B cell (primary cell): ENCODE measurements at regions of chr14 and their contacts with region 1.

Region 1: GRCh38 chr14:22822571-22823098 is 7.1 kb upstream of the MRPL52 start:
- DNase-seq: peak; percentile 87
- ATAC-seq: peak; percentile 67
- H3K4me3 ChIP-seq: peak overlapping the region; percentile 49 to 85 (median 56)
- H3K4me3 Mint-ChIP-seq: peak overlapping the region; percentile 88
- H3K27ac ChIP-seq: peak overlapping the region; percentile 65 to 71
- H3K27ac Mint-ChIP-seq: peak overlapping the region; percentile 94
- H3K4me1 ChIP-seq: peaks cover 31 to 47% of the 10 kb centered on the region in 2 donors
- H3K4me1 Mint-ChIP-seq: peaks cover 61% of the 10 kb centered on the region
- H3K27me3 ChIP-seq: no peaks in the 10 kb centered on the region
- H3K27me3 Mint-ChIP-seq: no peaks in the 10 kb centered on the region
- CTCF ChIP-seq: peak; percentile 82

Region 2: DNA sequence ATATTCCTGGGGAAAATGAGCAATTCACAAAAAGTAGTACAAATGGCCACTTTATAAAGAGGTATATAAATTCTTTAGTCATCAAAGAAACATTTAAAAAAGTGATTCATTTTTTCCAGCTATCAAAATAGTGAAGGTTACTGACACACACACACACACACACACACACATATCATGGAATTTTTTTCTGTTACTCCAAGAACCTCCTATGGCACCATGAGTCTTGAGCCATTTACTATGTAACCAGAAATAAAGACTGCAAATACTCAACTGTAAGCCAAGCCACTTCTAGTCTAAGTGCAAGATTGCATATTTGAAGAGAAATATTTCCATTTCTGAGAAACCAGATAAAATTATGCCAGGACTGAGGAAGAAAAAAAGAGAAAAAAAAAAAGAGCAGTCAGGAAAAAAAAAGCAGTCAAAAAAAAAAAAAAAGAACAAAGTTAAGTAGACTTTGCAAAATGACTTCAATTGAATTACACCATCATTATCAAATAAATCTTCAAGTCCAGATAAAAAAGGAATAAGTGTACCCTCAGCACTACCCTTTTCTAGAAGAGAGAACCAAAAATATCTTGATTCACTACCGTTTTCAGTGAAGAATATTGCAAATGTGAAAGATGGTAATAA is 509.3 kb before region 1 on chr14:
- CTCF ChIA-PET with region 1: no interaction called
- POLR2A ChIA-PET with region 1: no interaction called
- intact Hi-C with region 1: no loop called
- DNase-seq: no peak
- ATAC-seq: no peak
- H3K4me3 ChIP-seq: no peak overlapping the region
- H3K4me3 Mint-ChIP-seq: no peak overlapping the region
- H3K27ac ChIP-seq: no peak overlapping the region
- H3K27ac Mint-ChIP-seq: no peak overlapping the region
- H3K4me1 ChIP-seq: no peaks in the 10 kb centered on the region
- H3K4me1 Mint-ChIP-seq: peaks cover 5% of the 10 kb centered on the region
- H3K27me3 ChIP-seq: no peaks in the 10 kb centered on the region
- H3K27me3 Mint-ChIP-seq: no peaks in the 10 kb centered on the region
- CTCF ChIP-seq: no peak

Region 3: DNA sequence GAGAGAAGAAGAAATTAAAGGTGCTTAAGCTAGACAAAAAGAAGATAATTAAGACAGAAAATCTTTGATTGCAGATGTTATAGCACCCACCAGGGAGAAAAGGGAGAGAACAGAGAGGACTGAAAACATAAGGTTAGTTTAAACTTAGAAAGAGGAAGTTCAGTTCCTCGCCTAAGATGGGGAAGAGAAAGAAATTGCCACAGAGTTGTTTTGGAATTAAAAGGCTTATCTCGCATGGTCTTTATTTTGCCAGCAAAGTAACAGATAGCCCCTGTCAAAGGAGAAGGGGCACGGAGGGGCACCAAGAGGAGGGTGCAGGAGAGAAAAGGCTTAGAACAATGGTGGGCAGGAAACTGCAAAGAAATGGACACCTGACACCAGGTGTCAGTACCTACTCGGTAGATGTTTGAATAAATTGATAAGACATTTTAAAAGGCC is 74.0 kb before region 1 on chr14:
- CTCF ChIA-PET with region 1: interaction called, 16 read pairs
- POLR2A ChIA-PET with region 1: interaction called, 3 read pairs
- intact Hi-C with region 1: no loop called
- DNase-seq: peak; percentile 71
- ATAC-seq: peak; percentile 80
- H3K4me3 ChIP-seq: peak overlapping the region in 4 of 5 experiments; percentile 8 to 58 (median 32)
- H3K4me3 Mint-ChIP-seq: peak overlapping the region; percentile 80
- H3K27ac ChIP-seq: peak overlapping the region; percentile 70 to 75
- H3K27ac Mint-ChIP-seq: peak overlapping the region; percentile 99
- H3K4me1 ChIP-seq: peaks cover 15 to 17% of the 10 kb centered on the region in 2 donors
- H3K4me1 Mint-ChIP-seq: peaks cover 20% of the 10 kb centered on the region
- H3K27me3 ChIP-seq: no peaks in the 10 kb centered on the region
- H3K27me3 Mint-ChIP-seq: no peaks in the 10 kb centered on the region
- CTCF ChIP-seq: peak; percentile 49

Region 4: DNA sequence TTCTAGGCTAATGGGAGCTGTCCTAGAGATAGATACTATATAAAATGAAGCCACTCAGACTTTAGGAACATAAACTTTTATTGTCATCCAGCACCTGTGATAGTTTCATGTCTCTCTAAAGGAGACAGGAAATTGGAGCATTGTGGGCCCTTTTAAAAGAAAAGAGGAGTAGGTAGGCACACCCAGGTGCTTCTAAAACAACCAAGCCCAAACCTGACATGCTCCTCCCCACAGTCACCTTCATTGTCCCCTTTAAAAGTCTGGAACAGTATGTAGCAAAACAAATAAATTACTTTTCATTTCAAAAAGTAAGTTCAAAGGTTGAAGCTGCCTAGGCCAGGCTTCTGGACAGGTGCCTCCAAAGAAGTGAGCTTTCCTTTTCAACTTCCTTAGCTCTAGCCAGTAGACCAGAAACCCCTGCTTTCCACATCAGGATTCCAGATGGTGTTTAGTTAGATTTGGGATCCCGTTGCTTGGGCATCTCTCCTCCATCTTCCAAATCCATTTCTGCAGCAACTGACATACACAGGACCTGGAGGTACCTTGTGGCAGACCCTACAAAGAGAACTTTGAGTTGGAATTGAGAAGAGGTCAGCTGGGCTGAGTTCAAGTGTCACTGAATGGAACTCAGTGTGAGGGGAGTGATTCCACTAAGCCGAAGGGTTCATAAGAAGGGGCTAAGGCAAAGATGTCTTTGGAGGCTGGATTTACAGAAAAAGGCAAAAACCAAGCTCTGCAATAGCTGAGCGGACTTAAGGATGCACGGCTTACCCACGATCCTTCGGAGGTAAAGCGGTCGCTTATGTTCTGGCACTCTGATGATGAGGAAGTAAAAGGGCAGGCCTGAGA is 49.2 kb before region 1 on chr14:
- CTCF ChIA-PET with region 1: interaction called, 31 read pairs
- POLR2A ChIA-PET with region 1: no interaction called
- intact Hi-C with region 1: loop called (anchors 2 kb)
- DNase-seq: no peak
- ATAC-seq: no peak
- H3K4me3 ChIP-seq: no peak overlapping the region
- H3K4me3 Mint-ChIP-seq: no peak overlapping the region
- H3K27ac ChIP-seq: peak overlapping the region in 1 of 2 donors; percentile 26
- H3K27ac Mint-ChIP-seq: peak overlapping the region; percentile 39
- H3K4me1 ChIP-seq: peaks cover 0 to 2% of the 10 kb centered on the region in 2 donors
- H3K4me1 Mint-ChIP-seq: peaks cover 12% of the 10 kb centered on the region
- H3K27me3 ChIP-seq: no peaks in the 10 kb centered on the region
- H3K27me3 Mint-ChIP-seq: no peaks in the 10 kb centered on the region
- CTCF ChIP-seq: no peak

Region 5: DNA sequence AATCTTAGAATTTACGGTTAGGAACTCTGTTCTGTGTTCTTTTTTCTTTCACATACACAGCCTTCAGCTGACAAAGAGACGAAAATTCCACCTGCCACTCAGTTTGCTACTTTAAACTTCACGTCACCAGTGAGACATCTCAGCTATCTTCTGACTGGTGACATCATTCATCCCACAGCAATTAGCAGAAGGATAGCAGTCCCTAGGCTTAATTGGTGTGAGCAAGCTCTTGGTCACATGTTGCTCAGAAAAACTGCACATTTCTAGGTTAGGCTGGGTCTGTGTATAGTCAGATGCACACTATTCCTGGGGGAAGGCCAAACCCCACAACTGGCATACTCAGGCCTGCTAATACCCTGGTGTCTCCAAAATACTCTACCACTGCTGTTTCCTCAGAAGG is 31.3 kb before region 1 on chr14:
- CTCF ChIA-PET with region 1: interaction called, 29 read pairs
- POLR2A ChIA-PET with region 1: interaction called, 20 read pairs
- intact Hi-C with region 1: loop called (anchors 1 kb)
- DNase-seq: peak; percentile 31
- ATAC-seq: no peak
- H3K4me3 ChIP-seq: no peak overlapping the region
- H3K4me3 Mint-ChIP-seq: peak overlapping the region; percentile 43
- H3K27ac ChIP-seq: peak overlapping the region; percentile 75 to 84
- H3K27ac Mint-ChIP-seq: peak overlapping the region; percentile 78
- H3K4me1 ChIP-seq: peaks cover 43 to 51% of the 10 kb centered on the region in 2 donors
- H3K4me1 Mint-ChIP-seq: peaks cover 59% of the 10 kb centered on the region
- H3K27me3 ChIP-seq: no peaks in the 10 kb centered on the region
- H3K27me3 Mint-ChIP-seq: no peaks in the 10 kb centered on the region
- CTCF ChIP-seq: no peak

Region 6: GRCh38 chr14:22836301-22837113 is 13.9 kb after region 1 on chr14 and contains the start of gene MMP14:
- CTCF ChIA-PET with region 1: interaction called, 23 read pairs
- POLR2A ChIA-PET with region 1: interaction called, 6 read pairs
- intact Hi-C with region 1: no loop called
- DNase-seq: no peak
- ATAC-seq: peak; percentile 36
- H3K4me3 ChIP-seq: peak within 1 kb of the TSS; percentile 30 to 66 (median 62)
- H3K4me3 Mint-ChIP-seq: peak within 1 kb of the TSS; percentile 96
- H3K27ac ChIP-seq: no peak within 1 kb of the TSS
- H3K27ac Mint-ChIP-seq: peak within 1 kb of the TSS; percentile 94
- H3K4me1 ChIP-seq: peaks cover 18 to 22% of the 10 kb centered on the region in 2 donors
- H3K4me1 Mint-ChIP-seq: peaks cover 23% of the 10 kb centered on the region
- H3K27me3 ChIP-seq: peaks cover 0 to 29% (median 11%) of the 10 kb centered on the region in 4 experiments
- H3K27me3 Mint-ChIP-seq: peaks cover 4% of the 10 kb centered on the region
- CTCF ChIP-seq: no peak
- total RNA-seq, gene MMP14: 3.5 and 5.2 TPM in 2 replicates

Region 7: DNA sequence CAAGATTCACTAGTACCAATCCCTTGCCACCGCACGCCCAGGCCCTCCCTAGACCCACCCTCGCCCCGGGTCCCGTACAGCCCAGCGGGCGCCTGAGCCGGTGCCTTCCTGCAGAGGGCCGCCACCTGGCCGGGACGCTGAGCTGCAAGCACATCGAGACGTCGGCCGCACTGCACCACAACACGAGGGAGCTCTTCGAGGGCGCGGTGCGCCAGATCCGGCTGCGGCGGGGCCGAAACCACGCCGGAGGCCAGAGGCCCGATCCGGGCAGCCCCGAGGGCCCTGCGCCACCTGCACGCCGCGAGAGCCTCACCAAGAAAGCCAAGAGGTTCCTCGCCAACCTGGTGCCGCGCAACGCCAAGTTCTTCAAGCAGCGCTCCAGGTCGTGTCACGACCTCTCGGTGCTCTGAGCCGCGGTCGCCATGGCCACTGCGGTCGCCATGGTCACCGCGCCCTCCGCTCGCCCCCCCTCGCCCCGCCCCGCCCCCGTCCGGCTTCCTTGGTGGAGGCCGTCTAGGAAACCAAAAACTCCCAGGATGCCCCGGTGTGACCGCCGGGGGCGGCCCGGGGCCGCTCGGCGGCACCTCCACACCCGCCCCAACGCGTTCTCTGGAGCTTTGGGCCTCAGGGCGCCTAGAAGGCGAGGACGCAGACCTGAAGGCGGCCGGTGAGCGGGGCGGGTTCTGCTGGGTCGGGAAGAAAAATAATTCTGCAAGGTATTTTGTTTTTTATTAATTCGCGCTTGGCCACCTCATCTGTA is 64.0 kb after region 1 on chr14:
- CTCF ChIA-PET with region 1: interaction called, 9 read pairs
- POLR2A ChIA-PET with region 1: interaction called, 10 read pairs
- intact Hi-C with region 1: loop called (anchors 2 kb)
- DNase-seq: peak; percentile 89
- ATAC-seq: peak; percentile 62
- H3K4me3 ChIP-seq: peak overlapping the region; percentile 44 to 83 (median 67)
- H3K4me3 Mint-ChIP-seq: peak overlapping the region; percentile 97
- H3K27ac ChIP-seq: peak overlapping the region; percentile 85 to 94
- H3K27ac Mint-ChIP-seq: peak overlapping the region; percentile 99
- H3K4me1 ChIP-seq: peaks cover 55 to 83% of the 10 kb centered on the region in 2 donors
- H3K4me1 Mint-ChIP-seq: peaks cover 71% of the 10 kb centered on the region
- H3K27me3 ChIP-seq: no peaks in the 10 kb centered on the region
- H3K27me3 Mint-ChIP-seq: no peaks in the 10 kb centered on the region
- CTCF ChIP-seq: peak; percentile 42